ENCODE measurements at regions of chrX and their contacts with region 1.

Region 1: GRCh38 chrX:134338527-134338926 is 101.5 kb downstream of the CCDC160 start:
- DNase-seq: no peak
- H3K4me3 ChIP-seq: no peak overlapping the region
- H3K27ac ChIP-seq: no peak overlapping the region
- H3K4me1 ChIP-seq: no peaks in the 10 kb centered on the region
- H3K27me3 ChIP-seq: no peaks in the 10 kb centered on the region
- CTCF ChIP-seq: no peak

Region 2: GRCh38 chrX:132622130-132622529 is 1716.4 kb before region 1 on chrX:
- CTCF ChIA-PET with region 1: no interaction called
- POLR2A ChIA-PET with region 1: interaction called, 10 read pairs
- intact Hi-C with region 1: no loop called
- DNase-seq: peak; percentile 57
- H3K4me3 ChIP-seq: no peak overlapping the region
- H3K27ac ChIP-seq: no peak overlapping the region
- H3K4me1 ChIP-seq: no peaks in the 10 kb centered on the region
- H3K27me3 ChIP-seq: peaks cover 6% of the 10 kb centered on the region
- CTCF ChIP-seq: no peak

Region 3: GRCh38 chrX:133939655-133940302 is 398.7 kb before region 1 on chrX:
- CTCF ChIA-PET with region 1: no interaction called
- POLR2A ChIA-PET with region 1: no interaction called
- intact Hi-C with region 1: no loop called
- DNase-seq: peak; percentile 1
- H3K4me3 ChIP-seq: no peak overlapping the region
- H3K27ac ChIP-seq: no peak overlapping the region
- H3K4me1 ChIP-seq: no peaks in the 10 kb centered on the region
- H3K27me3 ChIP-seq: peaks cover 7% of the 10 kb centered on the region
- CTCF ChIP-seq: no peak